Activated CD4-positive, alpha-beta memory T cell treated with anti-CD3 and anti-CD28 coated beads for 36 hours (primary cell): ENCODE measurements at regions of chr12 and their contacts with region 1.

Region 1: DNA sequence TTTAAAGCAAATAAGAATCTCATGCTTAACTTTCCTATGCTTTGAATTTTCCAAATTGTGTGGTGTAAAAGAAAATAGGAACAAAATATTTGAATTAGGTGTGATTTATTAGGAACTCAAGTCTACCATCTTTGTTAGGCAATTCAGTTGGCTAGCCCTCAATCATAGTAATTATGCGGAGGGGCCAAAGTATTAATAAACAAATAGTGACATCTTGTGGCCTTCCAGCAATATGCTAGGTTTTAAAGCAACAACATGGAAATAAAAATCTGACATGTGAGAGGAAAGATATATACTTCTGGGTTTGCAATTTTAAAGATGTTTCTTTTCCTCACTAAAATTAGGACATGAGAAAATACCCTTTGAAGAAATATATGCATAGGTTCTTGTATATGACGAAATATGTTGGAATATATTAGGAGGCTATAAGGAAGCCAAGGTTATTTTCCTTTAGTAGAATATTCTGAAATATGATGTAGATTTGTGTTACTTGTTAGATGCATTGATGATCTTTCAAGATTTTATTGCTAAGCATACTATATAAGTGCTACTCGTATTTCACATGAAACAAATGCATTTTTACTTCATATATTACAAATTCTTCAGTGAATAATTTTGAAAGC is 200.4 kb downstream of the PTPRO start:
- DNase-seq: no peak
- H3K4me3 Mint-ChIP-seq: no peak overlapping the region
- H3K27ac Mint-ChIP-seq: no peak overlapping the region
- H3K4me1 Mint-ChIP-seq: no peaks in the 10 kb centered on the region
- H3K27me3 Mint-ChIP-seq: peaks cover 29% of the 10 kb centered on the region

Region 2: GRCh38 chr12:15227004-15227679 is 295.5 kb before region 1 on chr12:
- CTCF ChIA-PET with region 1: no interaction called
- POLR2A ChIA-PET with region 1: no interaction called
- intact Hi-C with region 1: loop called (anchors 1 kb)
- DNase-seq: peak; percentile 43
- H3K4me3 Mint-ChIP-seq: no peak overlapping the region
- H3K27ac Mint-ChIP-seq: no peak overlapping the region
- H3K4me1 Mint-ChIP-seq: no peaks in the 10 kb centered on the region
- H3K27me3 Mint-ChIP-seq: peaks cover 27% of the 10 kb centered on the region

Region 3: GRCh38 chr12:15505616-15506015 is 17.1 kb before region 1 on chr12:
- CTCF ChIA-PET with region 1: no interaction called
- POLR2A ChIA-PET with region 1: no interaction called
- intact Hi-C with region 1: no loop called
- DNase-seq: no peak
- H3K4me3 Mint-ChIP-seq: no peak overlapping the region
- H3K27ac Mint-ChIP-seq: no peak overlapping the region
- H3K4me1 Mint-ChIP-seq: no peaks in the 10 kb centered on the region
- H3K27me3 Mint-ChIP-seq: peaks cover 6% of the 10 kb centered on the region